ENCODE measurements at regions of chr16 and their contacts with region 1.

Region 1: DNA sequence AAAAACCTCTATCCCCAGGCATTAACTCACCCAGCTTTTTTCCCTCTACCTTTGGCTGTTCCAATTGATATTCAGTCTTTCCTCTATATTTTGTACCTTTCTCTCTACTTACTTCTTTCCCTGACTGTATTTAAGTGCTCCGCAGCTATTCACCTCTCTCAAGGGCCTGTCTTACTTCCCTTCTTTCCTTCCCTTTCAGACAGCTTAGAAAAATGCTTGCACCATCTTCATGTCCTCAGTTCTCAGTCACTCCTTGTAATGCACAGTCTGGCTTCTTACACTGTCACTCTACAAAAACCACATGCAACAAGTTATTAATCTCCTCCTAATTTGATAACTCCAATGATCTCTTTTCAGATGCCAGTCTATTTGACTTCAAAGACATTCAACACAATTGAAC is 163.4 kb downstream of the PHKB start:
- DNase-seq: no peak
- ATAC-seq: no peak
- H3K4me3 ChIP-seq: no peak overlapping the region
- H3K27ac ChIP-seq: no peak overlapping the region
- H3K4me1 ChIP-seq: peaks cover 4% of the 10 kb centered on the region
- H3K27me3 ChIP-seq: no peaks in the 10 kb centered on the region
- CTCF ChIP-seq: no peak
- EP300 ChIP-seq: no peak
- POLR2A ChIP-seq: no peak
- RAD21 ChIP-seq: no peak

Region 2: GRCh38 chr16:47581112-47581511 is 43.5 kb before region 1 on chr16:
- CTCF ChIA-PET with region 1: no interaction called
- POLR2A ChIA-PET with region 1: no interaction called
- RAD21 ChIA-PET with region 1: no interaction called
- SMC1A ChIA-PET with region 1: interaction called, 12 read pairs
- in situ Hi-C with region 1: no loop called
- intact Hi-C with region 1: no loop called
- DNase-seq: no peak
- ATAC-seq: no peak
- H3K4me3 ChIP-seq: no peak overlapping the region
- H3K27ac ChIP-seq: no peak overlapping the region
- H3K4me1 ChIP-seq: no peaks in the 10 kb centered on the region
- H3K27me3 ChIP-seq: no peaks in the 10 kb centered on the region
- CTCF ChIP-seq: no peak
- EP300 ChIP-seq: no peak
- POLR2A ChIP-seq: no peak
- RAD21 ChIP-seq: no peak

Region 3: DNA sequence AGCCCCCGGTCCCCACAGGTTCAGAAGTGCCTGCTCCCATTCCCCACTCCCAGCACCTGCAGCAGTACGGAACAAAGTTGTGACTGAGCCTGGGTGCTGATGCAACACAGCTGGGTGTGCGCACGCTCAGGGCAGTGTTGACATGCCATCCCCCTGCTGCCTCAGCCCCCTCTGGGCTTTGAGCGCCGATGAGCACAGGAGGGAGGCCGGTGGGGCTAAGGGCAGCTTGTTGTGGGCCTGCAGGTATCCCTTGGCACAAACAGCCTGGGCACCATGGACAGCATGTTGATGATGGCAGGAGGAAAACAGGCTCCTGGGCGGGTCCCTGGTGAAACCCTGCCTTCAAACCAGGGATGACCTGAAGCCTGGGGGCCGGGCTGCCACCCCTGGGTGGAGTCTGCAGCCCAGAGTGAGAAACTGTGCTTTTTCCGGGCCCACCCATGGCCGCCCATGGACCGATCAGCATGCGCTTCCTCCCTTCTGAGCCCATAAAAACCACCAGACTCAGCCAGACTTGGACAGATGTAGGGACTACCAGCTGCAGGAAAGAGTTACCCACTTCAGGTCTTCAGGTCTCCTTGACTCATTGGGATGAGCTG is 12.0 kb after region 1 on chr16:
- CTCF ChIA-PET with region 1: interaction called, 3 read pairs
- POLR2A ChIA-PET with region 1: no interaction called
- RAD21 ChIA-PET with region 1: no interaction called
- SMC1A ChIA-PET with region 1: interaction called, 11 read pairs
- in situ Hi-C with region 1: no loop called
- intact Hi-C with region 1: no loop called
- DNase-seq: no peak
- ATAC-seq: no peak
- H3K4me3 ChIP-seq: no peak overlapping the region
- H3K27ac ChIP-seq: no peak overlapping the region
- H3K4me1 ChIP-seq: no peaks in the 10 kb centered on the region
- H3K27me3 ChIP-seq: no peaks in the 10 kb centered on the region
- CTCF ChIP-seq: no peak
- EP300 ChIP-seq: no peak
- POLR2A ChIP-seq: no peak
- RAD21 ChIP-seq: no peak

Region 4: DNA sequence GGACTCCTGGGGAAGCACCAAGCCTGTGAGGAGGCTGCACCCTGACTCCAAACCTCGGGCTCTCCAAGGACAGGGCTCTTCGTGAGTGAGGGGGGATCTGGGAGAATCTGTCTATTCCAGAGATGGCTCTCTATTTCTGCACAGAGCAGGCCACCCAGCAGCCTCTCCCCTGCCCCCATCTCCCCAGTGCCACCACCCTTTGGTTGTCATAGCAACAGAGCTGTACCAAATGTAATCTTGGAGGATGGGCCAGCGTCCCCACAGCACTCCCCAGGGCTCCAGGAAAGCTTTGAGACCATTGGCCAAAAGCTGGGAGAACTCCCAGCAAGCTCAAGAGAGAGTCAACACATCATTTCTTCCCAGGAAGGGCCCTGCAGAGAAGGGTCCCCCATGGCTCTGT is 481.9 kb after region 1 on chr16:
- CTCF ChIA-PET with region 1: no interaction called
- POLR2A ChIA-PET with region 1: no interaction called
- RAD21 ChIA-PET with region 1: no interaction called
- SMC1A ChIA-PET with region 1: no interaction called
- in situ Hi-C with region 1: no loop called
- intact Hi-C with region 1: no loop called
- DNase-seq: no peak
- ATAC-seq: no peak; the same call in 2 of the 3 replicates
- H3K4me3 ChIP-seq: no peak overlapping the region
- H3K27ac ChIP-seq: no peak overlapping the region
- H3K4me1 ChIP-seq: peaks cover 17% of the 10 kb centered on the region
- H3K27me3 ChIP-seq: no peaks in the 10 kb centered on the region
- CTCF ChIP-seq: no peak
- EP300 ChIP-seq: no peak
- POLR2A ChIP-seq: no peak
- RAD21 ChIP-seq: no peak

Measured in GM12878 (cell line).